Heart right ventricle (tissue), 16 donors: ENCODE measurements at regions of chr22 and their contacts with region 1.

Region 1: GRCh38 chr22:17742527-17742902 is 31.8 kb downstream of the BID start:
- DNase-seq: peak; percentile 58 to 61
- ATAC-seq: peak in 7 of 8 donors; percentile 50 to 77 (median 70)
- H3K4me3 ChIP-seq: no peak overlapping the region
- H3K27ac ChIP-seq: no peak overlapping the region
- H3K4me1 ChIP-seq: peaks cover 0 to 22% (median 14%) of the 10 kb centered on the region in 9 donors
- H3K27me3 ChIP-seq: no peaks in the 10 kb centered on the region
- CTCF ChIP-seq: peak; percentile 62 to 83 (median 75)

Region 2: DNA sequence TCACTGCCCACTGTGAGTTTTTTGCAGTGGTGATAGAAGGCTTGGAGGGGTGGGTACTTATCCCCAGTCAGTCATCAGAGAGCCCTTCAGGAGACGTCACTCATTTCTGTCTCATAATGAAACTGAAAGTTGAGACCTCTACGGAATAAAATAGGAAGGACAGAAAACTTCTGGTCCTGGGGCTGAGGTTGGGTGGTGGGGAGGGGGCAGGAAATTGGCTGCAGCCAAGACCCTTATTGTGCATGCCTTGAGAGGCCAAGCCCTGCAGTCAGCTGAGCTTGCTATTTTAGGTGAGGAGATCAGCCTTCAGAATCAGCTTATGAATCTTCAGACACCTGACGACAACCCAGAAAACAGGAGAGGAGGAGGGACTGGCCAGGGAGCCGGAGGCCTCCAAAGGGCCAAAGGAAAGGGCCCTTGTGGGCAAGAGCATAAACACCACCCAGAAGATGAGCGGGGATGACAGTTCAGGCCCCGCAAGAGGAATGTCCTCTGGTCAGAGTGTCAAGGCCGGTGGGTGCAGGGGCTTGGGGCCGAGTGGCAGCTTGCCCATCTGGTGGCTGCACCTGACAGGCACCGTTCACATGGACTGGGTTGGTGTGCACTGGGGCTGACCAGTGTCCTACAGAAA is 505.4 kb before region 1 on chr22:
- intact Hi-C with region 1: no loop called
- DNase-seq: no peak
- ATAC-seq: peak in 5 of 8 donors; percentile 28 to 38 (median 31)
- H3K4me3 ChIP-seq: peak overlapping the region in 1 of 10 donors; percentile 28
- H3K27ac ChIP-seq: peak overlapping the region in 1 of 10 donors; percentile 81
- H3K4me1 ChIP-seq: peaks cover 0 to 20% (median 0%) of the 10 kb centered on the region in 9 donors
- H3K27me3 ChIP-seq: peaks cover 0 to 25% (median 11%) of the 10 kb centered on the region in 7 donors
- CTCF ChIP-seq: no peak

Region 3: DNA sequence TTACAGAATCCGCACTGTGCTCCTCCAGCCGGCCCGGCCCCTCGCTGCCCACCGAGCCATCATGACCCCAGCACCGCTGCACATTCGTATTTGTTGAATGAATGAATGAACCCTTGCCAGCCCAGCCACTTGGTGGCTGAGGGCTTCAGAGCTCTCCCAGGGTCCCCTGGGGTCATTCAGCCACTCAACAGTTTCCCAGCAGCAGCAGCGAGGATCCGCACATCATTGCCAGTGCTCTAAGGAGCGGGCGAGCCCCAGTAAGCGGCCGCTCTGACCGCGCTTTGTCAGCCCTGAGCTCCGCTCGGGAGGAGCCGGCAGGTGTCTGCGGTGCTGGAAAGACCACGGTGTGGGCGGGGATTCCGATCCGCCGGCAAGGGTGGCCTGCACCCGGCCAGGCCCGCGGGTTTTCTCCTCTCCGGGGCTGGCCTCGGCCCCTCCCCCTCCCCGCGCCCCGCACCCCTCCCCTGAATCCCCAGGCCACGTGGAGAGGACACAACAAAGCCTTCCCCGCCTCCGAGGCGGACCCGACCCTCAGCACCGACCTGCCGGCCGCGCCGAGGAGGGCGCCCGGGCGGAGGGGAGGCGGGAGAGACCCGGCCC is 31.2 kb after region 1 on chr22:
- intact Hi-C with region 1: loop called in 1 of 10 experiments (anchors 5 kb)
- DNase-seq: peak in 1 of 2 donors; percentile 44
- ATAC-seq: peak; percentile 29 to 52 (median 34)
- H3K4me3 ChIP-seq: peak overlapping the region; percentile 30 to 81 (median 73)
- H3K27ac ChIP-seq: peak overlapping the region; percentile 29 to 98 (median 73)
- H3K4me1 ChIP-seq: peaks cover 3 to 84% (median 20%) of the 10 kb centered on the region in 9 donors
- H3K27me3 ChIP-seq: no peaks in the 10 kb centered on the region
- CTCF ChIP-seq: no peak

Region 4: GRCh38 chr22:17802822-17803221 is 60.3 kb after region 1 on chr22:
- intact Hi-C with region 1: loop called in 1 of 10 experiments (anchors 5 kb)
- DNase-seq: no peak
- ATAC-seq: no peak
- H3K4me3 ChIP-seq: no peak overlapping the region
- H3K27ac ChIP-seq: no peak overlapping the region
- H3K4me1 ChIP-seq: peaks cover 0 to 8% (median 7%) of the 10 kb centered on the region in 9 donors
- H3K27me3 ChIP-seq: no peaks in the 10 kb centered on the region
- CTCF ChIP-seq: no peak

Region 5: GRCh38 chr22:18060646-18061620 is 318.4 kb after region 1 on chr22:
- intact Hi-C with region 1: loop called in 1 of 10 experiments (anchors 10 kb)
- DNase-seq: no peak
- ATAC-seq: peak in 2 of 8 donors; percentile 15 to 23
- H3K4me3 ChIP-seq: no peak overlapping the region
- H3K27ac ChIP-seq: peak overlapping the region in 2 of 10 donors; percentile 41 to 50
- H3K4me1 ChIP-seq: peaks cover 8 to 49% (median 17%) of the 10 kb centered on the region in 9 donors
- H3K27me3 ChIP-seq: peaks cover 0 to 17% (median 0%) of the 10 kb centered on the region in 7 donors
- CTCF ChIP-seq: no peak